ENCODE measurements at regions of chr17 and their contacts with region 1.

Region 1: DNA sequence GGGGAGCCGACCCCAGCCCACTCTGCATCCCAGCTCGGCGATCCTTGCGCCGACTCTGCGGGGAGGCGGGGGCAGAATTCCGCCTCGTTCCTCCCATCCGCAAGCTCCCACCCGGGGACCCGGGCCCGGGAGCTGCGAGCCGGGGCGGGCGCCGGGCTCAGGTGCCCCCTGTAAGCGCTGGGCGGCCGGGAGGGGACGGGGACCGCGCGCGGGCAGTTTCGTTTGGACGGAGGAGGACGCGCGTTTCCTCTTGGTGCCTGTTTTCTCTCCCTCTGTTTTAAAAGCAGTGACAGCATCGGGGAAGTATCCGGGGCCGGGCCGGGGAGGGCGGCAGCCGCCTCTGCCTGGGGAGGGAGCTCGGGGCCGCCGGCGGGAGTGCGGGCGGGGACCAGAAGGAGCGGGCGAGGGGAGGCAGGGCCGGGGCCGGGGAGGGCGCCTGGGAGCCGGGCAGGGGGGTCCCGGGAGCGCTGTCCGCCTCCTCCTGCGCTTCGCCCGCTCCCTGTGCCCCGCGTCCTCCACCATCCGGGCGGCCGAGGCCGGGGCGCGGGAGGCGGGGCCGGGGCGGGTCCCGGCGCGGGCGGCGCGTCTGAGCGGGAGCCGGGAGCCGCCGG is 57.0 kb downstream of the RAP1GAP2 start:
- DNase-seq: peak in 2 of 3 donors; percentile 46 to 56
- ATAC-seq: peak; percentile 31 to 51 (median 42)
- H3K4me3 ChIP-seq: peak overlapping the region; percentile 38 to 48 (median 38)
- H3K27ac ChIP-seq: peak overlapping the region in 1 of 3 donors; percentile 18
- H3K4me1 ChIP-seq: peaks cover 0 to 8% (median 0%) of the 10 kb centered on the region in 4 donors
- H3K27me3 ChIP-seq: peaks cover 0 to 22% of the 10 kb centered on the region in 2 donors
- CTCF ChIP-seq: no peak
- POLR2A ChIP-seq: no peak

Region 2: DNA sequence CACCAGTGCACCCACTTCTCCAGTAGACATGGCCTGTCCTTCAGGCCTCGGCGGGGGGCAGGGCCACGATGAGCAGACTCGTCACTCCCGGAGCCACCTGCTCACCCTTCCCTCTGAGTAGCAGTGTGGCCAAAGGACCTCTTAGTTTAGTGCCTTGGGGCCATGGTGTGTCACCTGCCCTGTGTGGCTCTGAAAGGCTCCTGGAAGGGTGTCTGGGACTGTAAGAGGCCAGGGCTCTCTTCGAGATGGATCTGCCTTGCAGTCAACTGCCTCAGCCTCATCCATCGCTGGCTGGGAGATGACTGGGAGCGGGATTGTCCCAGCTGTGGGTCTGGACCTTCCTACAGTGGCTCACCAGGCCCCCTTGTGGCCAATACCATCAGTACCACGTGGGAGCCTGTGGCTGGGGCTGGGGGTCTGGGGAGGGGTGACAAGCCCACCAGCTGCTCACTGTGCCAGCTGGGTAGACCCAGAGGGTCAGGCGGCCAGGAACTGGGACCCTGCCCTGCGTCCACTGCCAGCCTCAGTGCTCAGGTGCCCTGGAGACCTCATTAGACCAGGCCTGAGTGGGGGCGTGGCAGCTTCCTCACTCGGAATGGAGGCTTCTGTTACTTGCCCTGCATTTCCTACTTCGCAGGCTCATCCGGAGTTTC is 76.8 kb after region 1 on chr17:
- intact Hi-C with region 1: loop called in 1 of 2 experiments (anchors 10 kb)
- DNase-seq: peak in 1 of 3 donors; percentile 40
- ATAC-seq: peak; percentile 62 to 80 (median 69)
- H3K4me3 ChIP-seq: no peak overlapping the region
- H3K27ac ChIP-seq: no peak overlapping the region
- H3K4me1 ChIP-seq: no peaks in the 10 kb centered on the region
- H3K27me3 ChIP-seq: no peaks in the 10 kb centered on the region
- CTCF ChIP-seq: peak; percentile 47 to 58 (median 54)
- POLR2A ChIP-seq: no peak

Region 3: GRCh38 chr17:3012926-3013581 is 159.8 kb after region 1 on chr17:
- intact Hi-C with region 1: loop called in 1 of 2 experiments (anchors 10 kb)
- DNase-seq: peak; percentile 66 to 77 (median 73)
- ATAC-seq: peak; percentile 92 to 98 (median 94)
- H3K4me3 ChIP-seq: no peak overlapping the region
- H3K27ac ChIP-seq: no peak overlapping the region
- H3K4me1 ChIP-seq: no peaks in the 10 kb centered on the region
- H3K27me3 ChIP-seq: no peaks in the 10 kb centered on the region
- CTCF ChIP-seq: peak; percentile 83 to 93 (median 90)
- POLR2A ChIP-seq: no peak

Measured in right lobe of liver (tissue), 6 donors.